ENCODE measurements at regions of chr10 and their contacts with region 1.

Region 1: GRCh38 chr10:30591249-30591670 is 38.3 kb downstream of the LYZL2 start:
- DNase-seq: peak; percentile 67
- H3K4me3 ChIP-seq: no peak overlapping the region
- H3K27ac ChIP-seq: no peak overlapping the region
- H3K4me1 ChIP-seq: peaks cover 6% of the 10 kb centered on the region
- H3K27me3 ChIP-seq: no peaks in the 10 kb centered on the region
- CTCF ChIP-seq: peak; percentile 82

Region 2: GRCh38 chr10:29998142-29998808 is 593.0 kb before region 1 on chr10:
- CTCF ChIA-PET with region 1: interaction called, 9 read pairs
- POLR2A ChIA-PET with region 1: no interaction called
- intact Hi-C with region 1: loop called (anchors 10 kb)
- DNase-seq: peak; percentile 90
- H3K4me3 ChIP-seq: no peak overlapping the region
- H3K27ac ChIP-seq: no peak overlapping the region
- H3K4me1 ChIP-seq: peaks cover 23% of the 10 kb centered on the region
- H3K27me3 ChIP-seq: no peaks in the 10 kb centered on the region
- CTCF ChIP-seq: peak; percentile 99

Region 3: GRCh38 chr10:30359373-30360206 is 231.7 kb before region 1 on chr10:
- CTCF ChIA-PET with region 1: interaction called, 19 read pairs
- POLR2A ChIA-PET with region 1: no interaction called
- intact Hi-C with region 1: no loop called
- DNase-seq: peak; percentile 72
- H3K4me3 ChIP-seq: no peak overlapping the region
- H3K27ac ChIP-seq: no peak overlapping the region
- H3K4me1 ChIP-seq: no peaks in the 10 kb centered on the region
- H3K27me3 ChIP-seq: no peaks in the 10 kb centered on the region
- CTCF ChIP-seq: peak; percentile 91

Region 4: GRCh38 chr10:30392564-30392990 is 198.7 kb before region 1 on chr10:
- CTCF ChIA-PET with region 1: interaction called, 12 read pairs
- POLR2A ChIA-PET with region 1: no interaction called
- intact Hi-C with region 1: loop called (anchors 2 kb)
- DNase-seq: peak; percentile 77
- H3K4me3 ChIP-seq: peak overlapping the region; percentile 23
- H3K27ac ChIP-seq: no peak overlapping the region
- H3K4me1 ChIP-seq: no peaks in the 10 kb centered on the region
- H3K27me3 ChIP-seq: no peaks in the 10 kb centered on the region
- CTCF ChIP-seq: peak; percentile 92

Region 5: DNA sequence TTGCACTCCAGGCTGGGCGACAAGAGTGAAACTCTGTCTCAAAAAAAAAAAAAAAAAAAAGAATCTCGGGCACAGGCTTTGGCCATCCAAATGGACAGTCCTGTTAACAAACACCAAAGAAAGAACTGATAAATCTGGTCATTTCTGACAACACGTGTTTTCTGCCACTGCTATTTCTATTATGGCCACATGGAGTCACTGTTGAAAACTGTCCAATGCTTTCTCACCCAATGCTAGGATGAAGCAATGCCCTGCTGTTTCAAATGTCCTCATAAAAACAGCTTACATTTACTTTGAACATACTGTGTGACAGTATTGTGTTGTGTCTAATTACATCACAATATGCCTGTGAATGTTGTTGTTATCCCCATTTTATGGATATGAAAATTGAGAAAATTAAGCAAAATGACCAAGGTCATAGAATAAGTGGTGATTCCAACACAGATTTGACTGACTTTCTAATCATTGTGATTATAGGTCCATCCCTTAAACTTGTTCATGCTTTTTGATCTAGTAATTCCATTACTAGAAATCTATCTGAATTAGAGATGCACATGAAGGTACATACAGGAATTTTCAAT is 177.2 kb before region 1 on chr10:
- CTCF ChIA-PET with region 1: interaction called, 12 read pairs
- POLR2A ChIA-PET with region 1: no interaction called
- intact Hi-C with region 1: no loop called
- DNase-seq: peak; percentile 80
- H3K4me3 ChIP-seq: no peak overlapping the region
- H3K27ac ChIP-seq: no peak overlapping the region
- H3K4me1 ChIP-seq: no peaks in the 10 kb centered on the region
- H3K27me3 ChIP-seq: no peaks in the 10 kb centered on the region
- CTCF ChIP-seq: peak; percentile 77

Region 6: DNA sequence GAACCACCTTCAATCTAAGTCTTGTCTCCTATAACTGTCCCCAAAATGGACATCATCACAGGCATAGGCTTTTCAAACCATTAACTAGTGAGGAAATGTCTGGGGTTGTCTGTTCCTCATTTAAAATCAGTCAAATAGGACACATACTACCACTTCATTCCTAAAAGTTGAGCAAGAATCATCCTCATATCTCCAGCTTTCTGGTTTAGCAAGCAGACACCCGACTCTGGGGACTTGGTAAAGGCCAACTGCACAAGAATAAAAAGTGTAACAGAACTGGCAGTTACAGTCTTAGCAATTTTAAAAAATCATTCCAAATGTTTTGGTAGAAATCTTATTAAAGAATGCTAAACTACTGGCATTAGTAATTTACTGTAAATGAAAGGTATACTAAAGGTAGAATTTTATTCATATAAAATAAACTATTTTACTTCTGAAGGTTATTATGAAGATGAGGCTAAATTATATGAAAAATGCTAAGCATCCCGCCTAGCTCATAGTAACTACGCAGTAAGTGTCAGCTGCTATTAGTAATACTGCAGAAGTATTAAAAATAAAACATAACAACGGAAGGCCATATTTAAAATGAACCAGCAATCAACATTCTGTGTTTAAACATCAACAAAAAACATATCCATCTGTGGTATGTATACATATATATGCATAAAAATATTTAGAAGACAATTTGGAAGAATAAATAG is 379.6 kb after region 1 on chr10:
- CTCF ChIA-PET with region 1: no interaction called
- POLR2A ChIA-PET with region 1: no interaction called
- intact Hi-C with region 1: no loop called
- DNase-seq: no peak
- H3K4me3 ChIP-seq: no peak overlapping the region
- H3K27ac ChIP-seq: no peak overlapping the region
- H3K4me1 ChIP-seq: no peaks in the 10 kb centered on the region
- H3K27me3 ChIP-seq: no peaks in the 10 kb centered on the region
- CTCF ChIP-seq: no peak

Region 7: GRCh38 chr10:31146491-31147209 is 555.4 kb after region 1 on chr10:
- CTCF ChIA-PET with region 1: no interaction called
- POLR2A ChIA-PET with region 1: no interaction called
- intact Hi-C with region 1: no loop called
- DNase-seq: no peak
- H3K4me3 ChIP-seq: no peak overlapping the region
- H3K27ac ChIP-seq: no peak overlapping the region
- H3K4me1 ChIP-seq: no peaks in the 10 kb centered on the region
- H3K27me3 ChIP-seq: no peaks in the 10 kb centered on the region
- CTCF ChIP-seq: no peak

Region 8: GRCh38 chr10:31288962-31289361 is 697.7 kb after region 1 on chr10:
- CTCF ChIA-PET with region 1: no interaction called
- POLR2A ChIA-PET with region 1: no interaction called
- intact Hi-C with region 1: no loop called
- DNase-seq: no peak
- H3K4me3 ChIP-seq: no peak overlapping the region
- H3K27ac ChIP-seq: no peak overlapping the region
- H3K4me1 ChIP-seq: no peaks in the 10 kb centered on the region
- H3K27me3 ChIP-seq: no peaks in the 10 kb centered on the region
- CTCF ChIP-seq: no peak